PC-9 (cell line): ENCODE measurements at regions of chr13 and their contacts with region 1.

Region 1: DNA sequence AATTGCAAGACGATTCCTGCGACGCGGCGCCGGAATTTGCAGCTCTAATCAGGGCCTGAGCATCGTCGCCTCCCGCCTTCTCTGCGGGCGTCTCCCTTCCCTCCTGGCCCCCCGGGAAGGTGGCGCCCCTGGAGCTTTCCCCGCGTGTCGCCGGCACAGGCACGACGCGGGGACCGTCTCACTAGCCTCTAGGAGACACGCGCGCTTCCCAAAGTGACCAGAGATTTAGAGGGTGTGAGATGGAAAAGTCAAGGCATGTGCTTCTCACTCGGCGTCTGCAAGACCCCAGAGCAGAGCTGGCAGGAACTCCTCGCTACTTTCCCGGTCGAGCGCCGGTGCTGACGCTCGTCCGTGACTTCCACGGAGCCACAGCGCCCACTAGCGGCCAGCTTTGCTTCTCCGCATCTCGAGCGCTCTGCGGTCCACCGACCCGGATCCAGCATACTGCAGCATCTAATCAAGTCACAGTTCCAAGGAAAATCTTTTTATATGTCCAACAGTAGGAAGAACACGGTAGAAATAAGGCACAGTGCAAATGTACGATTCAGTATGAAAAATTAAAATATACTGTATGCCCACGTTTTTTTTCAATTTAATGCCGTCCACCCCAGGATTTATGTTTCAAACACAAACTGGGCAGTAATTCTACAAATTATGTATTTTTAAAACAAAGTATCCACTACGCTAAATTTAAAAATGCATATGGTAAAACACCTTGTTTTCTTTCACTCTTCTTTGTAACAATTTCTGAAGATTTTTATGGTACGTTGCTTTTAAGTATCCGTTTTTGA is 977 bp upstream of the EFNB2 start:
- DNase-seq: peak; percentile 70 to 79
- H3K4me3 ChIP-seq: peak overlapping the region; percentile 72
- H3K27ac ChIP-seq: peak overlapping the region; percentile 58
- H3K4me1 ChIP-seq: peaks cover 9% of the 10 kb centered on the region
- H3K27me3 ChIP-seq: no peaks in the 10 kb centered on the region
- CTCF ChIP-seq: peak; percentile 97

Region 2: DNA sequence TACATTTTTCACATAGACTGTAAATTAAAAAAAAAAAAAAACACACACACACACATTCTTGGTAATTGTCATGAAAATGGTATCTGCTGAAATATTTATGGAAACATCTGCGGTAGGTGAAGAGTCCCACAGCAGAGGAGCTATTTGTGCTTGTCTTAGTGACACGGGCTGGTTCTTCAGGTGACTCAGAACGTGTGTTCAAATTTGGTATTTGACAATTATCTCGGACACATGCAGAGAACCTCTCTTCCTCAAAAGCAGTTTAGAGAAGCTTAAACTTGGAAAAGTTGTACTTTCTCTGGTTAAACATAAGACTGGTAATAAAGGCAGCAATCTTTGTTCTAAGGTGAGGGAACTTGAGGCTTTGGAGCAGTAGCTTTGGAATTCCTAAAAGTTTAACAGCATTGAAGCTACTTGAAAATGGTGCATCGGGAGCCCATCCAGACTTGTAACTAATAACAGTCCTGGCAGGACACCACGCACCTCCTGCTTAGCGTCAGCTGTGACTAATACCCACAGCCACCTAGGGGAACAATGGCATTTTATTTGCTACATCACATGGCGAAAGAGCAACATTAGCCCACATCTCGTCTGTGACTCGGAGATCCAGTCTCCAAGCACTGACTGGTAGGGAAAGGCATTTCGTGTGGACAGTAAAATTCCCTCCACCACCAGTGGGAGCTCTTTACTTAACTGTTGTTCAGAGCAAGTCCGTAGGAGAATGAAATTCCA is 1965.1 kb before region 1 on chr13:
- CTCF ChIA-PET with region 1: interaction called, 5 read pairs
- POLR2A ChIA-PET with region 1: no interaction called
- intact Hi-C with region 1: loop called (anchors 1 kb)
- DNase-seq: peak; percentile 72 to 75
- H3K4me3 ChIP-seq: peak overlapping the region; percentile 26; the same call in 1 of the 2 replicates
- H3K27ac ChIP-seq: no peak overlapping the region
- H3K4me1 ChIP-seq: peaks cover 7% of the 10 kb centered on the region; the same call in 1 of the 2 replicates
- H3K27me3 ChIP-seq: no peaks in the 10 kb centered on the region
- CTCF ChIP-seq: peak; percentile 78

Region 3: DNA sequence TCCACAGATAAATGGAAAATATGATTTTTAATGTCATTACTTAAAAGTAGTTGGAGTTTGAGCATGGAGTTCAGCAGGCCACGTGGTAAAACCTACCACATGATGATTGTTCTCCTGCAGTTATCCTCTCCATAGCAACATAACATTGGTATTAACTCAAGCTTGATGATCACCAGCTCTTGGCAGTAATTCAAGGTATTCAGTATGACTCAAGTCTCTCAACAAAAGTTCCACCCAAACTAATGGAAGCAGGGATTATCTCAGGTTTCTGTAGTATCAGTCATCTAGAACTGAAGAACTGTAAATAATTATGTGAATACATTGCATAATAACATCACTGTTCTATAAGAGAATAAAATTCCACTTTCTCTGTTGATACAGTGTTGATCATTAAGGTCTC is 1093.5 kb before region 1 on chr13:
- CTCF ChIA-PET with region 1: no interaction called
- POLR2A ChIA-PET with region 1: no interaction called
- intact Hi-C with region 1: loop called (anchors 5 kb)
- DNase-seq: peak; percentile 28 to 98
- H3K4me3 ChIP-seq: no peak overlapping the region
- H3K27ac ChIP-seq: peak overlapping the region; percentile 68
- H3K4me1 ChIP-seq: peaks cover 16% of the 10 kb centered on the region
- H3K27me3 ChIP-seq: no peaks in the 10 kb centered on the region
- CTCF ChIP-seq: no peak

Region 4: GRCh38 chr13:105817021-105817420 is 719.4 kb before region 1 on chr13:
- CTCF ChIA-PET with region 1: no interaction called
- POLR2A ChIA-PET with region 1: no interaction called
- intact Hi-C with region 1: loop called (anchors 10 kb)
- DNase-seq: peak in 1 of 2 experiments; percentile 95
- H3K4me3 ChIP-seq: no peak overlapping the region
- H3K27ac ChIP-seq: no peak overlapping the region; the same call in 1 of the 2 replicates
- H3K4me1 ChIP-seq: peaks cover 40% of the 10 kb centered on the region
- H3K27me3 ChIP-seq: no peaks in the 10 kb centered on the region
- CTCF ChIP-seq: no peak

Region 5: GRCh38 chr13:106083620-106084350 is 452.7 kb before region 1 on chr13:
- CTCF ChIA-PET with region 1: no interaction called
- POLR2A ChIA-PET with region 1: no interaction called
- intact Hi-C with region 1: loop called (anchors 5 kb)
- DNase-seq: peak; percentile 25 to 44
- H3K4me3 ChIP-seq: no peak overlapping the region
- H3K27ac ChIP-seq: no peak overlapping the region
- H3K4me1 ChIP-seq: no peaks in the 10 kb centered on the region
- H3K27me3 ChIP-seq: no peaks in the 10 kb centered on the region
- CTCF ChIP-seq: peak; percentile 68

Region 6: GRCh38 chr13:106291006-106291405 is 245.4 kb before region 1 on chr13:
- CTCF ChIA-PET with region 1: no interaction called
- POLR2A ChIA-PET with region 1: no interaction called
- intact Hi-C with region 1: loop called (anchors 2 kb)
- DNase-seq: peak; percentile 62 to 90
- H3K4me3 ChIP-seq: no peak overlapping the region
- H3K27ac ChIP-seq: peak overlapping the region; percentile 55
- H3K4me1 ChIP-seq: peaks cover 14% of the 10 kb centered on the region
- H3K27me3 ChIP-seq: no peaks in the 10 kb centered on the region
- CTCF ChIP-seq: no peak

Region 7: DNA sequence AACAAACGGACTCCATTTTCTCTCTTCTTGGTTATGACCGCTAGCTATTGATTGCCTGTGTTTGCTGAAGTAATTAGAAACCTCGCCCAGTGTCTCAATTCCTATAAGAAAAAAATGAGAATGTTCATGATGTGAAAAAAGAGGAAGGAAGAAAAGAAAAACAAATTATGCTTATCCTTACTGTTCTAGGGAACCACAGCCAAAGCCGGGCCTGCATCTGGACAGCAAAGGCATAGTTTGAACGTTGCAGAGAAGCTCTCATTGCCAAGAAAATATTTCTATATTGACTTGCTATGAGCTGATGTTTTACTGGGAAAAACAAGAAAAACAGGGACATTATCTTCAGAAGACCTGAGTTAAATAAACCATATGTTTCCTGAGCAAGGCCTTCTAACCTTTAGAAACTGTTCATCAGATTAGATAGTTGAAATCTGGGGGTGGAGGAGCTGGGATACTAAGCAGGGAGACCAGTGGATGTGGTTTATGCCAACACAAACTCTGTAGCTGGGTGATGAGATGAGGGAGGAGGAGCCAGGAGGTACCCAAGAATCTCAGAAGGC is 56.0 kb before region 1 on chr13:
- CTCF ChIA-PET with region 1: no interaction called
- POLR2A ChIA-PET with region 1: no interaction called
- intact Hi-C with region 1: no loop called
- DNase-seq: no peak
- H3K4me3 ChIP-seq: no peak overlapping the region
- H3K27ac ChIP-seq: no peak overlapping the region
- H3K4me1 ChIP-seq: 0 out of 2 replicates have a peak, but pooled peaks cover 9% of the 10 kb centered on the region
- H3K27me3 ChIP-seq: no peaks in the 10 kb centered on the region
- CTCF ChIP-seq: no peak

Region 8: GRCh38 chr13:107144432-107144831 is 608.0 kb after region 1 on chr13:
- CTCF ChIA-PET with region 1: no interaction called
- POLR2A ChIA-PET with region 1: no interaction called
- intact Hi-C with region 1: loop called (anchors 5 kb)
- DNase-seq: no peak
- H3K4me3 ChIP-seq: no peak overlapping the region
- H3K27ac ChIP-seq: no peak overlapping the region
- H3K4me1 ChIP-seq: no peaks in the 10 kb centered on the region
- H3K27me3 ChIP-seq: no peaks in the 10 kb centered on the region
- CTCF ChIP-seq: peak; percentile 61

Region 9: GRCh38 chr13:108003607-108004006 is 1467.2 kb after region 1 on chr13:
- CTCF ChIA-PET with region 1: no interaction called
- POLR2A ChIA-PET with region 1: no interaction called
- intact Hi-C with region 1: no loop called
- DNase-seq: peak; percentile 67 to 76
- H3K4me3 ChIP-seq: no peak overlapping the region
- H3K27ac ChIP-seq: no peak overlapping the region
- H3K4me1 ChIP-seq: peaks cover 8% of the 10 kb centered on the region
- H3K27me3 ChIP-seq: no peaks in the 10 kb centered on the region
- CTCF ChIP-seq: no peak